ENCODE measurements at regions of chr21 and their contacts with region 1.

Region 1: GRCh38 chr21:43646550-43647260 is 12.6 kb downstream of the HSF2BP start:
- H3K4me3 Mint-ChIP-seq: no peak overlapping the region
- H3K27ac Mint-ChIP-seq: peak overlapping the region; percentile 79
- H3K4me1 Mint-ChIP-seq: peaks cover 19% of the 10 kb centered on the region
- H3K27me3 Mint-ChIP-seq: peaks cover 10% of the 10 kb centered on the region

Region 2: GRCh38 chr21:42923541-42924432 is 722.9 kb before region 1 on chr21:
- intact Hi-C with region 1: loop called (anchors 10 kb)
- H3K4me3 Mint-ChIP-seq: peak overlapping the region; percentile 27
- H3K27ac Mint-ChIP-seq: peak overlapping the region; percentile 60
- H3K4me1 Mint-ChIP-seq: peaks cover 14% of the 10 kb centered on the region
- H3K27me3 Mint-ChIP-seq: no peaks in the 10 kb centered on the region

Region 3: GRCh38 chr21:43603641-43604496 is 42.8 kb before region 1 on chr21:
- intact Hi-C with region 1: loop called (anchors 2 kb)
- H3K4me3 Mint-ChIP-seq: peak overlapping the region; percentile 46
- H3K27ac Mint-ChIP-seq: no peak overlapping the region
- H3K4me1 Mint-ChIP-seq: peaks cover 17% of the 10 kb centered on the region
- H3K27me3 Mint-ChIP-seq: no peaks in the 10 kb centered on the region

Region 4: DNA sequence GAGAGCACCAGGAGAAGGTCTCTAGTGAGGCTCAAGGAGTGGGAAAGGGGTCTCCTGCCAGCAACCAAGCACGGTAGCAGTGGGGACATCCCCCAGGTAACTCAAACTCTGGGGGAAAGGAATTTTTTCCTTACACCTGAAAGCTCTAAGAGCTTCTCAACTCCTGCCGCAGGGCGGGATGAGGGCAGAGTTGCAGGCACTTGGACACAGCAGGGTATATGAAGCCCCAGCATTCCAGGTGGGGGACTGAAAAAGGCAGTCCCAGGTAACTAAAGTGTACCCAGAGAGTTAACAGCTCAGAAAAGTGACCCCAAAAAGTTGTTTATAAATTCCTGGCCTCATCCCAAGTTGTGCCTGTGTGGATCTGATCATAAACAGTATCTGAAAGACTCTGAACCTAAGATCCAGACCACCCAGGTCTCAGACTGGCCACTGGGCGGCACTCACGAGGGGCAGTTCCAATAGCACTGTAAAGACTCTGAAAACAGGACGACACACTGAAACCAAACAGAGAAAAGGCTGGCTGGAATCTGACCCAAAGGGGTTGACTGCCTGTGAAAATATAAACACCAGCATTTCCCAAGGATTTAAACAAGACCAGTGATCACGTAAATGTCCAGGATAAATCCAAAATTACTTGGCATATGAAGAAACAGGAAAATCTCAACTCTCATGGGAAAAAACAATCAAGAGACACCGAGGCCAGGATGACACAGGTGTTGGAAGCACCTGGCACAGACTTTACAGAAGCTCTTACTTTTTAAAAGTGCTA is 34.9 kb before region 1 on chr21:
- intact Hi-C with region 1: loop called (anchors 2 kb)
- H3K4me3 Mint-ChIP-seq: no peak overlapping the region
- H3K27ac Mint-ChIP-seq: no peak overlapping the region
- H3K4me1 Mint-ChIP-seq: peaks cover 21% of the 10 kb centered on the region
- H3K27me3 Mint-ChIP-seq: peaks cover 14% of the 10 kb centered on the region

Region 5: DNA sequence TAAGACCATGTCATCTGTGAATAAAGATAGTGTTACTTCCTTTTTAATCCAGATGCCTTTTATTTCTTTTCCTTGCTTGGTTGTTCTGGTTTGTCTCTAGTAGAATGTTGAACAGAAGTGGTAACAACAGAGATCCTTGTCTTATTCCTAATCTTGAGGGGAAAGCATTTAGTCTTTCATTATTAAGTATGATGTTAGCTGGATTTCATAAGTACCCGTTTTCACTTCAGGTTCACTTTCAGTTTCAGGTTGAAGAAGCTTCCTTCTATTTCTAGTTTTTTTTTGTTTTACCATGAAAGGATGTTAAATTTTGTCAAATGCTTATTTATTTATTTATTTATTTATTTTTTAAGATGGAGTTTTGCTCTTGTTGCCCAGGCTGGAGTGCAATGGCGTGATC is 196.0 kb after region 1 on chr21:
- intact Hi-C with region 1: no loop called
- H3K4me3 Mint-ChIP-seq: peak overlapping the region; percentile 14
- H3K27ac Mint-ChIP-seq: peak overlapping the region; percentile 83
- H3K4me1 Mint-ChIP-seq: peaks cover 29% of the 10 kb centered on the region
- H3K27me3 Mint-ChIP-seq: peaks cover 7% of the 10 kb centered on the region